ENCODE measurements at regions of chr10 and their contacts with region 1.

Region 1: DNA sequence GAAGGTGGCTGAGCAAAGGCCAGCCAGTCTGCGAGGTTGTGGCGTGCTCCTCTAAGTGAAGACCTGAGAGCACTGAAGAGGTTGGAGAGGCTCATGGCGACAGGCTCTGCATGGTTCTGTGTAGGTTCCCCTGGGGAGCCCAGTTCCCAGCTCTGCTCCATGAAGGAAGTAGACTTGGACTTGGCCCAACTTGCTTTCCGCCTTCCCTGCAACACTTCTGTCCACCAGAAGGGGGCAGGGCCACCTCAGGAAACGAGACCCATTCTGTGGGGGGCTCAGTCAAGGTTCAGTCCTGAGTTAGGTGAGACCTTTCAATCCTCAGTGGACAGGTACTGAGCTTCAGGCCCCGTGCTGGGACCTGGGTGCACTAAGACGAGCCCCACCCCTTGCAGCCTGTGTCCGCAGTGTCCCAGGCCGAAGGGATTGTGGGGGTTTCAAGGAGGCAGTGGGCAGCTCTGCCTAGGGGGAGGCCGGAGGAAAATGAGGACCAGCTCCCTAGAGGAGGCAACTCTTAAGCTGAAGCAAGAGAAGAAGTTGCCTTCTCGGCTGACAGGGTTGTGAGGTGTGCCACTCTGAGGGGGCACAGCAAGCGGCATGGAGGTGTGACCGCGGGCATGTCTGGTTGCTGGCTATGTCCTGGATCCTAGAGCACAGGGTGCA is 15.0 kb upstream of the PCBD1 start:
- DNase-seq: peak in 4 of 9 experiments; percentile 28 to 54 (median 36)
- ATAC-seq: peak; percentile 36
- H3K4me3 ChIP-seq: no peak overlapping the region
- H3K4me3 Mint-ChIP-seq: no peak overlapping the region
- H3K27ac ChIP-seq: no peak overlapping the region
- H3K27ac Mint-ChIP-seq: no peak overlapping the region
- H3K4me1 ChIP-seq: no peaks in the 10 kb centered on the region
- H3K4me1 Mint-ChIP-seq: no peaks in the 10 kb centered on the region
- H3K27me3 ChIP-seq: no peaks in the 10 kb centered on the region
- H3K27me3 Mint-ChIP-seq: peaks cover 2% of the 10 kb centered on the region
- CTCF ChIP-seq: peak; percentile 70

Region 2: DNA sequence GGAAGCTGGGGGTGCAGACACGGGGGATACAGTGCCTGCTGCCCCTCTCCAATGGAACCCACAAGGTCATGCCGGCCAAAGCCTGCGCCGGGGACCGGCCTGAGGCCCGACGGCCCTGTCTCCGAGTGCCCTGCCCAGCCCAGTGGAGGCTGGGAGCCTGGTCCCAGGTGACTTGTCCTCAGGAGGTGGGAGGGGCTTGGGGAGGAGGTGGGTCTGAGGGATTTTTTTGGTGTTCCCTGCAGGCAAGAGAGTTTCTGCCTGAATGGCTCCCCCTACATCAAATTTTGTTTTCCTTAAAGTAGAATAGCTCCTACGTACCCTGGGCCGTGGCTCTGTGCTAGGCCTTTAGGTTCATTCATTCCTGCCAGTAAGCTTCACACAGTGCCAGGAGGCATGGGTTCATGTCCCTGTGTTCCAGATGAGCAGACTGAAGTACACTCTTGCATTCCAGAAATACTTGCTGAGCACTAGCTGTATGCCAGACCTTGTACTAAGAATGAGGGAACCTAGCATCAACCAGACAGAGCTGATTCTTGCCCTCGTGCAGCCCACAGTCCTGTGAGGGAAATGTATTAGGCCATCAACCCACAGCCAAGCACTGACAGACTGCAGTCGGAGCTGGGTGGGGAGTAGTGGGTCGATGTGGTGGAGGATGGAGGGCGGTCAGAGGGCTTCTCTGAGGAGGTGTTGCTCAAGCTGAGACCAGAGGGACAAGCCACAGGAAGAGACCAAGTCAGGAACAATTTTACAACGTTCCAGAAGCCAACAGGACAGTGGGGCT is 149.4 kb before region 1 on chr10:
- CTCF ChIA-PET with region 1: no interaction called
- POLR2A ChIA-PET with region 1: no interaction called
- intact Hi-C with region 1: no loop called
- DNase-seq: no peak
- ATAC-seq: no peak
- H3K4me3 ChIP-seq: no peak overlapping the region
- H3K4me3 Mint-ChIP-seq: no peak overlapping the region
- H3K27ac ChIP-seq: no peak overlapping the region
- H3K27ac Mint-ChIP-seq: no peak overlapping the region
- H3K4me1 ChIP-seq: no peaks in the 10 kb centered on the region
- H3K4me1 Mint-ChIP-seq: peaks cover 5% of the 10 kb centered on the region
- H3K27me3 ChIP-seq: no peaks in the 10 kb centered on the region
- H3K27me3 Mint-ChIP-seq: no peaks in the 10 kb centered on the region
- CTCF ChIP-seq: no peak

Region 3: DNA sequence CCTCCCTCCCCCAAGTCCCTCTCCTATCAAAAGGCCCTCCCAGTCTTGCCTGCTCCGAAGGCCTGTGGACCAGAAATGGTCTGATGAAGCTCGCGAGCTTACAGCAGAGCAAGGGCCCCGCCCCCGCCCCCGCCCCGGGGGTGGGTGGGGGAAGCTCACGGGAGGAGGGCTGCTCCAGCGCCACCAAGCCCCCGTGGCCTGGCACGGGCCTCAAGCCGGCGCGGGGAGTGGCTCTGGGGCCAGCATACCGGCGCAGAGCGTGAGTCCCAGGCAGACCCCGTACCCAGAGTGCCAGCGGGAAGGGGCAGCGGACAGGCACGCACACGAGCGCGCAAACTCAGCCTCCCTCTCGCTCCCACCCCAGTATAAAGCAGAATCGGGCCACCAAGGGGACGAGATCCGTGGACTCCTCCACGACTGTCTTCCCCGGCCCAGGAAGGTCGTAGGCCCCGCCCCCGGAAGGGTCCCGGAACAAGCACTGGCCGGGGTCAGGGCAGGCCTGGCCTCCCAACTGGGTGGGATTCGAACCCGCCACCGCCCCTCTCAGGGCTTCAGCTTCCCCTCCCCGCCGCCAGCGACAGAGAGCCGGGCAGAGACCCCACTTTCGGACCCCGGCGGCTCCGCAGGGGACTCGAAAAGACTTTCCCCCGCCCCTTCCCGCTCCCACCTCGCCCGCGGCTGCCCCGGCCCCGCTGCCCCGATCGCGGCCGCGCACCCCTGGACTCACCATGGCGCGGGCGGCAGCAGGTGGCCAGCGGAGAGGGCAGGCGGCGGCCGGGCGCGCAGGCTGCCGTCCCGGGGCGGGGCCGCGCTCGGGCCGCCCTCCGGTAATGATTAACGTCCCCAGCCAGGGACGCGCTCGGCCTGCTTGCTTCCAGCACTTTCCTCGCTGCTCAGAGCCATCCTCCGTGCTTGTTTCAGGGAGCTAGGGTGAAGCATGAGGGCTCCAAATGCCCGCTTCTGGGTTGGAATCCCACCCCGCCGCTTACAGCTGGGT is 15.3 kb before region 1 on chr10 and contains the start of gene PCBD1:
- CTCF ChIA-PET with region 1: interaction called, 12 read pairs
- POLR2A ChIA-PET with region 1: no interaction called
- intact Hi-C with region 1: no loop called
- DNase-seq: peak; percentile 36 to 82 (median 75)
- ATAC-seq: peak; percentile 93
- H3K4me3 ChIP-seq: peak within 1 kb of the TSS; percentile 69 to 91
- H3K4me3 Mint-ChIP-seq: peak within 1 kb of the TSS; percentile 89
- H3K27ac ChIP-seq: peak within 1 kb of the TSS; percentile 65 to 92
- H3K27ac Mint-ChIP-seq: peak within 1 kb of the TSS; percentile 91
- H3K4me1 ChIP-seq: peaks cover 16% of the 10 kb centered on the region
- H3K4me1 Mint-ChIP-seq: peaks cover 14% of the 10 kb centered on the region
- H3K27me3 ChIP-seq: no peaks in the 10 kb centered on the region
- H3K27me3 Mint-ChIP-seq: no peaks in the 10 kb centered on the region
- CTCF ChIP-seq: no peak
- total RNA-seq, gene PCBD1: 4.3 to 4.5 TPM

Region 4: GRCh38 chr10:70991140-70992124 is 88.0 kb after region 1 on chr10:
- CTCF ChIA-PET with region 1: no interaction called
- POLR2A ChIA-PET with region 1: no interaction called
- intact Hi-C with region 1: no loop called
- DNase-seq: no peak
- ATAC-seq: no peak
- H3K4me3 ChIP-seq: no peak overlapping the region
- H3K4me3 Mint-ChIP-seq: no peak overlapping the region
- H3K27ac ChIP-seq: no peak overlapping the region
- H3K27ac Mint-ChIP-seq: no peak overlapping the region
- H3K4me1 ChIP-seq: no peaks in the 10 kb centered on the region
- H3K4me1 Mint-ChIP-seq: no peaks in the 10 kb centered on the region
- H3K27me3 ChIP-seq: no peaks in the 10 kb centered on the region
- H3K27me3 Mint-ChIP-seq: peaks cover 3% of the 10 kb centered on the region
- CTCF ChIP-seq: no peak

Region 5: DNA sequence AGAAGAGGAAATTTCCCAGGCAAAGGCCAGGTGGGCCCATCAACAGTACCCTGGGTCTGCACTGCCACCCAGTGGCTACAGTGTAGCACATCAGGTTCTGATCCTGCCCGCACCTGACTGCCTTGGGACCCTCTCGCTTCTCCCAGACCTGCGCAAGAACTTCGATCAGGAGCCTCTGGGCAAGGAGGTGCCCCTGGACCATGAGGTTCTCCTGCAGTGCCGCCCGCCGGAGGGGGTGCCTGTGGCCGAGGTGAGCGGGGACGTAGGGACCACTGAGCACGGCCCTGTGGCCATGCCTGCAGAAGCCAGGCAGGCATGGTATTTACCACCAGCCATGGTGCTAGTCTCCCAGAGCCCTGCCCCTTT is 381.8 kb after region 1 on chr10:
- CTCF ChIA-PET with region 1: interaction called, 4 read pairs
- POLR2A ChIA-PET with region 1: no interaction called
- intact Hi-C with region 1: loop called (anchors 1 to 2 kb)
- DNase-seq: peak in 5 of 9 experiments; percentile 7 to 47 (median 25)
- ATAC-seq: peak; percentile 48
- H3K4me3 ChIP-seq: no peak overlapping the region
- H3K4me3 Mint-ChIP-seq: no peak overlapping the region
- H3K27ac ChIP-seq: no peak overlapping the region
- H3K27ac Mint-ChIP-seq: no peak overlapping the region
- H3K4me1 ChIP-seq: no peaks in the 10 kb centered on the region
- H3K4me1 Mint-ChIP-seq: no peaks in the 10 kb centered on the region
- H3K27me3 ChIP-seq: no peaks in the 10 kb centered on the region
- H3K27me3 Mint-ChIP-seq: no peaks in the 10 kb centered on the region
- CTCF ChIP-seq: peak; percentile 53

Measured in CD8-positive, alpha-beta T cell (primary cell).